CD14-positive monocyte (primary cell): ENCODE measurements at regions of chr4 and their contacts with region 1.

Region 1: GRCh38 chr4:39446751-39447573 is 11.8 kb downstream of the RPL9 start:
- DNase-seq: peak; percentile 31 to 76 (median 56)
- H3K4me3 ChIP-seq: peak overlapping the region in 2 of 3 experiments; percentile 1 to 59
- H3K4me3 Mint-ChIP-seq: peak overlapping the region; percentile 72 to 81
- H3K27ac ChIP-seq: no peak overlapping the region
- H3K27ac Mint-ChIP-seq: peak overlapping the region in 1 of 7 donors; percentile 76
- H3K4me1 ChIP-seq: peaks cover 5 to 16% of the 10 kb centered on the region in 2 donors
- H3K4me1 Mint-ChIP-seq: peaks cover 11% of the 10 kb centered on the region
- H3K27me3 ChIP-seq: peaks cover 0 to 5% of the 10 kb centered on the region in 2 donors
- H3K27me3 Mint-ChIP-seq: peaks cover 4 to 12% (median 10%) of the 10 kb centered on the region in 3 donors
- CTCF ChIP-seq: no peak

Region 2: DNA sequence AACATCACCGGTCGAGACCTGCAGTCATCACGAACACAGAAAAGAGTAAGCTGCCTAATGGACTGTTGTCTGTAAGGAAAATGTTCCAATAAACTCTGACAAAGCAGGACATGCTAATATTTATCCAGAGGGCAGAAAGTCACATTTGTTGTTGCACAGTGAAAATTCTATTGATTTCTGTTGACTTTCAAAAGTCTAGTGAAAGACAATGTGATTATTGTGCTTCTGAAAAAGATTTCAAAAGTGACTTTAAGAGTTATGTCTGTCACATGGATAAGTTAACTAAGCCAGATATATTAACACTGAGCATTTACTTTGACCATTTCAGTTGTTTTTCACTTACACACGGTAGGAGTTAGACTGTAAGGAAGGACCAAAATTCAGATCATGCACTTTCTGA is 71.5 kb before region 1 on chr4:
- intact Hi-C with region 1: loop called in 1 of 2 experiments (anchors 10 kb)
- DNase-seq: no peak
- H3K4me3 ChIP-seq: no peak overlapping the region
- H3K4me3 Mint-ChIP-seq: no peak overlapping the region
- H3K27ac ChIP-seq: no peak overlapping the region
- H3K27ac Mint-ChIP-seq: no peak overlapping the region
- H3K4me1 ChIP-seq: no peaks in the 10 kb centered on the region
- H3K4me1 Mint-ChIP-seq: no peaks in the 10 kb centered on the region
- H3K27me3 ChIP-seq: no peaks in the 10 kb centered on the region
- H3K27me3 Mint-ChIP-seq: peaks cover 3 to 12% (median 9%) of the 10 kb centered on the region in 3 donors
- CTCF ChIP-seq: no peak